IMR-90 (cell line): ENCODE measurements at regions of chr11 and their contacts with region 1.

Region 1: DNA sequence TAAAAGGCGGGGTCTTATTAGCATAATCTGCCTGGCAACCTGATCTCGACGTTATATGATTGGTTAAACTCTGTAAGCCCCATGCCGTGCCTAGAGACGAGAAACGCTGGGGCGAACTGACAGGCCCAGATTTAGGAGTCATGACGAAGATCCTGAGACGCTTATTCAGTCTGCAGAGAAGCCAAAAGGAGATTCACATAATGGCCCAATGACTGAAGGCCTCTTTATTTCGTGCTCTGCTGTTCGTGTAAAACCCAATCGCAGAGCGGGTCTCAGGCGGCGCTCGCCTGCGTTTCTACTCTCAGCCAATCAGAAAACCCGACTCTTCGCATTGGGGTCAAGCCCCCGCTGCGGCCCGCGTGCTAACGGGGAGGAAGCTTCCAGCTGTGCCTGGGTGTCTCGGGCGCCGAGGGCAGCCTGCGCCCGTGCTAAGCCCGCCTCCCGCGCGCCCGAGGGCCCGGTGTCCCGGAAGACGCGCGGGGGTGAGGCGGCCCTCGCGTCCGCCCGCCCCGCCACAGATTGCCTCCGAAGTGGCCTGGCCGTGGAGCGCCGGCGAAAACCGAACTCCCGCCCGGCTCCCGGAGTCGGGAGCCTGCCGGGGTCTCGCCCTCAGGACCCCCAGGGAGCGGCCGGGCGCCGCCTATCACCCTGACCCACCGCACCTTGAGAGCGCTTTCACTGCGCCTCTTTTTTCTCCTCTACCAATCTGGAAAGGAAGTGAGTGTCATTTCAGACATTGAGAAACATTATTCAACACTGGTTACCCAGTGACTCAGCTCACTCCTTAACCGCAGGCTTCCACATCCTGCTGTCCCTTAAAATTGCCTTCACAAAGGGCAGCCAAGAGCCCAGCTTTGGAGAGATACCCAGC is 446 bp upstream of the PRDM10 start:
- DNase-seq: peak; percentile 98
- ATAC-seq: peak; percentile 83
- H3K4me3 ChIP-seq: peak overlapping the region; percentile 62
- H3K27ac ChIP-seq: peak overlapping the region; percentile 90
- H3K4me1 ChIP-seq: no peaks in the 10 kb centered on the region
- H3K27me3 ChIP-seq: no peaks in the 10 kb centered on the region
- CTCF ChIP-seq: no peak
- POLR2A ChIP-seq: peak; percentile 92
- RAD21 ChIP-seq: 0 out of 2 replicates have a peak, but pooled peaks have one; percentile 23

Region 2: GRCh38 chr11:129611661-129612446 is 391.2 kb before region 1 on chr11:
- CTCF ChIA-PET with region 1: no interaction called
- POLR2A ChIA-PET with region 1: no interaction called
- dilution Hi-C with region 1: no loop called
- in situ Hi-C with region 1: no loop called
- intact Hi-C with region 1: no loop called
- DNase-seq: no peak
- ATAC-seq: no peak
- H3K4me3 ChIP-seq: no peak overlapping the region
- H3K27ac ChIP-seq: no peak overlapping the region
- H3K4me1 ChIP-seq: no peaks in the 10 kb centered on the region
- H3K27me3 ChIP-seq: peaks cover 10% of the 10 kb centered on the region
- CTCF ChIP-seq: no peak
- POLR2A ChIP-seq: no peak
- RAD21 ChIP-seq: no peak

Region 3: GRCh38 chr11:129922674-129923073 is 80.4 kb before region 1 on chr11:
- CTCF ChIA-PET with region 1: interaction called, 3 read pairs
- POLR2A ChIA-PET with region 1: interaction called, 9 read pairs
- dilution Hi-C with region 1: no loop called
- in situ Hi-C with region 1: no loop called
- intact Hi-C with region 1: loop called (anchors 2 kb)
- DNase-seq: no peak
- ATAC-seq: no peak
- H3K4me3 ChIP-seq: no peak overlapping the region
- H3K27ac ChIP-seq: no peak overlapping the region
- H3K4me1 ChIP-seq: no peaks in the 10 kb centered on the region
- H3K27me3 ChIP-seq: no peaks in the 10 kb centered on the region
- CTCF ChIP-seq: no peak
- POLR2A ChIP-seq: no peak
- RAD21 ChIP-seq: no peak

Region 4: DNA sequence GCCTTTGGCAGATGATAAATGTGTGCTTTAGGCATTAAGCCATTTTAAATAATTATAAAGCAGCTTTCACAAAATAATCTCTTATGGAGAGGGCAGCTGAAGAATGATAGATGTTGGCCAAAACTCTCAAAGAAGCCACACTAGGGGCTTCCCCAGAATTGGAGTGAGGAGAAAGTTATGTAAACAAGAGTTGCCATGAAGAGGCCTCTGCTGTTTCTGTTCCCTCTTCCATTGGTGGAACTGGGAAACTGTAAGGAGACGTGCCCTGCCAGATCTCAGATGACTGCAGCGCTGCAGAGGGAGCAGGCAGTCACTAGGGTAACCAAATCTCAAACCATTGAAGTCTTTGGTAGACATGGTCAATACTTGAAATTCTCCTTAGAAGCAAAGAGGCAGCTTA is 47.2 kb after region 1 on chr11:
- CTCF ChIA-PET with region 1: no interaction called
- POLR2A ChIA-PET with region 1: interaction called, 13 read pairs
- dilution Hi-C with region 1: no loop called
- in situ Hi-C with region 1: no loop called
- intact Hi-C with region 1: loop called (anchors 5 kb)
- DNase-seq: peak; percentile 58
- ATAC-seq: peak; percentile 75
- H3K4me3 ChIP-seq: no peak overlapping the region
- H3K27ac ChIP-seq: no peak overlapping the region
- H3K4me1 ChIP-seq: no peaks in the 10 kb centered on the region
- H3K27me3 ChIP-seq: peaks cover 3% of the 10 kb centered on the region; the same call in 1 of the 2 replicates
- CTCF ChIP-seq: no peak
- POLR2A ChIP-seq: no peak
- RAD21 ChIP-seq: no peak

Region 5: DNA sequence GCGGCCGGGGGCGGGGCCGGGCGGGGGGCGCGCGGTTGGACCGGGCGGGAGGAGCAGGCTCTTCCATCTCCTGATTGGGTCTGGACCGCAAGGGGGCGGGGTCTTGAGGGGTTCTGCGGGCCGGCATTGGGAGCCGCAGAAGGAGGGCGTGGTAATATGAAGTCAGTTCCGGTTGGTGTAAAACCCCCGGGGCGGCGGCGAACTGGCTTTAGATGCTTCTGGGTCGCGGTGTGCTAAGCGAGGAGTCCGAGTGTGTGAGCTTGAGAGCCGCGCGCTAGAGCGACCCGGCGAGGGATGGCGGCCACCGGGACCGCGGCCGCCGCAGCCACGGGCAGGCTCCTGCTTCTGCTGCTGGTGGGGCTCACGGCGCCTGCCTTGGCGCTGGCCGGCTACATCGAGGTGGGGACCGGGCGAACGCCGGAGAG is 66.6 kb after region 1 on chr11 and contains the start of gene APLP2:
- CTCF ChIA-PET with region 1: no interaction called
- POLR2A ChIA-PET with region 1: no interaction called
- dilution Hi-C with region 1: no loop called
- in situ Hi-C with region 1: no loop called
- intact Hi-C with region 1: loop called (anchors 1 kb)
- DNase-seq: peak; percentile 97
- ATAC-seq: peak; percentile 96
- H3K4me3 ChIP-seq: peak within 1 kb of the TSS; percentile 90
- H3K27ac ChIP-seq: peak within 1 kb of the TSS; percentile 95
- H3K4me1 ChIP-seq: peaks cover 4% of the 10 kb centered on the region; the same call in 1 of the 2 replicates
- H3K27me3 ChIP-seq: peaks cover 1% of the 10 kb centered on the region; the same call in 1 of the 2 replicates
- CTCF ChIP-seq: no peak
- POLR2A ChIP-seq: peak; percentile 98
- RAD21 ChIP-seq: no peak
- total RNA-seq, gene APLP2: 127 and 134 TPM in 2 replicates

Region 6: DNA sequence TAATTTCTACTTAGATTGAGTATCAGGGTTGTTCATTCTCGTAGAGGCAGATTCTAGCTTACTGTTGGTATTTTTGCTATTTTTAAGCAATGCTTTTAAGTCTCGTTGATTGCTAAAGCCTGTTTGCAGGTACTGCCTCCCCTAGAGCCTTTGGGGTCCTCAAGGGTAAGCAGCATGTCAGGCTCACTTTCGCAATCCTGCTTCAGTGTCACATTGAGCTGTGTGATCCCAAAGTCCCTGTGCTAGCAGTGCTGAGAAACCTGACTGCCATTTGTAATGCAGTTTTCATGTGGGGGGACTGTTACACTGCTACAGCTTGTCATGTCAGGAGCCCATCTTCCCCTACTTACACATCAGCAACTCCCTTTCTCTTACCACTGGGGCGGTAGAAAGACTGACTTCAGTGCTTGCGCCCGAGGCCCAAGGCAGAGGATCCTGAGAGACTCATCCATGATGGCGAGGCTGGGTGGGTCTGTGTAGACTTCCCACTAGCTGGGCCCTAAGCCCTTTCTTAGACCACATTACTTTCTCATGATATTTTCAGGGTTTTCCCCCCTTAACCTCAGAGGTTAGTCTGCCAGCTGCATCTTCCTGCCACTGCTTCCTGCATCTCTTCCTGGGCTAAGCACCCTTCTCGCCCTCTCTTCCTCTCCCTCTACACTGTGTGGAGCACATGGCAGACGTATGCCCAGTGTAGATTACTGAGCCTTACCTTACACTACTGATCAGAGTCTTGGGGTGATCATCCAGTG is 115.7 kb after region 1 on chr11:
- CTCF ChIA-PET with region 1: no interaction called
- POLR2A ChIA-PET with region 1: no interaction called
- dilution Hi-C with region 1: no loop called
- in situ Hi-C with region 1: no loop called
- intact Hi-C with region 1: no loop called
- DNase-seq: no peak
- ATAC-seq: no peak
- H3K4me3 ChIP-seq: no peak overlapping the region
- H3K27ac ChIP-seq: no peak overlapping the region
- H3K4me1 ChIP-seq: peaks cover 3% of the 10 kb centered on the region
- H3K27me3 ChIP-seq: no peaks in the 10 kb centered on the region; the same call in none of the 2 replicates
- CTCF ChIP-seq: no peak
- POLR2A ChIP-seq: no peak
- RAD21 ChIP-seq: no peak

Region 7: DNA sequence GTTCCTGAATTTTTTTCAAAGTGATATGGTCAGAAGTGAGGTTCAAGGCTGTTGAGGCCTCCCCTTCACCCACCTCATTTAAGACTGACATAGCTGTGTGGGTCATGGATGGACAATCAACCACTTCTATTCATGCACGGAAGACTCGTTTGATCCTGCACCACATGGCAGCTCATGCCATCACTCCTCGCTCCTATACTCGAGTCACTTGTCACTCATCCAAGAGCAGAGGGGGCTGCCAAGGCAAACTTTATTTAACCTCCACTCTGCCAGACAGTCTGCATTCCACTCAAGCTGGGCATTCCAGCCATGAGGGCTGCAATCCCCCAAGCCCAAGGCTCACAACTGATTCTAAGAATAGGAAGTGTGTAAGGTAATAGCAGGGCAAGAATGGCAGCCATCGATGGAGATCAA is 879.1 kb after region 1 on chr11:
- CTCF ChIA-PET with region 1: no interaction called
- POLR2A ChIA-PET with region 1: no interaction called
- dilution Hi-C with region 1: no loop called
- in situ Hi-C with region 1: no loop called
- intact Hi-C with region 1: loop called (anchors 5 kb)
- DNase-seq: no peak
- ATAC-seq: no peak
- H3K4me3 ChIP-seq: no peak overlapping the region
- H3K27ac ChIP-seq: no peak overlapping the region
- H3K4me1 ChIP-seq: peaks cover 4% of the 10 kb centered on the region; the same call in 1 of the 2 replicates
- H3K27me3 ChIP-seq: no peaks in the 10 kb centered on the region
- CTCF ChIP-seq: no peak
- POLR2A ChIP-seq: no peak
- RAD21 ChIP-seq: no peak